ENCODE measurements at regions of chr19 and their contacts with region 1.

Region 1: GRCh38 chr19:56367829-56368711 is 25.3 kb downstream of the ZNF582 start:
- DNase-seq: peak; percentile 85
- H3K4me3 ChIP-seq: peak overlapping the region; percentile 38 to 63 (median 56)
- H3K27ac ChIP-seq: peak overlapping the region; percentile 79 to 88 (median 81)
- H3K4me1 ChIP-seq: peaks cover 0 to 11% (median 4%) of the 10 kb centered on the region in 4 donors
- H3K27me3 ChIP-seq: no peaks in the 10 kb centered on the region
- CTCF ChIP-seq: peak in 1 of 5 experiments; percentile 13
- EP300 ChIP-seq: no peak
- POLR2A ChIP-seq: peak; percentile 52

Region 2: DNA sequence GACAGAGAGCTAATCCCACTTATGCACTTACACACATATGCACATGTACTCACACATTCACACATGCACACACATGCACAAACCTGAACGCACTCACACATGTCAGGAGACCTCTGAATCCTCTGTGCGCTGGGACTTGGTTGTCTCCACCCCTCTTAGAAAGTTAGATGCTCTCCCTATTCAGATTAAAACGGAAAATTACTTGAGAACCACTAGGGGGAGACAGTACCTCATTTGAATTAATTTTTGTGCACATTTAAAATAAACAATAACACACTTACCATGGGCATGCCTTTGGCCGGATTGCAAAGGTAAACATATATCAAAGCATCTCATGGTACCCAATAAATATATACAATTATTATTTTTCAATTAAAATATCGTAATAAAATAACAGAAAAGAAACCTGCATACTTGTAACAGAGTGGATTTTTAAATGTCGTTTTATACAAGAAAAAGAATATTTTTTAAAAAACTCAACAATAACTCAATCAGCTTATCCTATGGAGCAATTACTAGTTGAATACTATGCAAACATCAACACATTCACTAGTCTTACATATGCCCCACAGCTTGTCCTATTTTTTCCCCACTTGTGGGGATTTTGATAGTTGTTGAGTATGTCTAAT is 1714.8 kb before region 1 on chr19:
- in situ Hi-C with region 1: no loop called
- intact Hi-C with region 1: loop called (anchors 10 kb)
- DNase-seq: no peak
- H3K4me3 ChIP-seq: no peak overlapping the region
- H3K27ac ChIP-seq: no peak overlapping the region
- H3K4me1 ChIP-seq: no peaks in the 10 kb centered on the region
- H3K27me3 ChIP-seq: peaks cover 7% of the 10 kb centered on the region
- CTCF ChIP-seq: peak; percentile 25 to 56 (median 50)
- EP300 ChIP-seq: no peak
- POLR2A ChIP-seq: no peak

Region 3: DNA sequence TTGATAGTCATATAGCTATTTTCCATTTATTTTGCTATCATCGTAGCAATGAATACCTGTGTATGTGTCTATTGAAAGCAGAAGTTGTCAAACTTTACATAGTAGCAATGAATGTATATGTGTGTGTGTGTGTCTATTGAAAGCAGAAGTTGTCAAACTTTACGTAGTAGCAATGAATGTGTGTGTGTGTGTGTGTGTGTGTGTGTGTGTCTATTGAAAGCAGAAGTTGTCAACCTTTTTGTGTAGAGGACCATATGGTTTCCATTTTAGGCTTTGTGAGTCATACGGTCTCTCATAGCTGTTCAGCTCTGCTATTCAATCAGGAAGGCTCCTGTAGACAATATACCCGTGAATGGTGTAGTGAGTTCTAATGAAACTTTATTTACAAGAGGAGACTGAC is 510.9 kb before region 1 on chr19:
- in situ Hi-C with region 1: no loop called
- intact Hi-C with region 1: no loop called
- DNase-seq: no peak
- H3K4me3 ChIP-seq: no peak overlapping the region
- H3K27ac ChIP-seq: no peak overlapping the region
- H3K4me1 ChIP-seq: no peaks in the 10 kb centered on the region
- H3K27me3 ChIP-seq: no peaks in the 10 kb centered on the region
- CTCF ChIP-seq: no peak
- EP300 ChIP-seq: no peak
- POLR2A ChIP-seq: no peak

Region 4: GRCh38 chr19:56217039-56217949 is 150.8 kb before region 1 on chr19:
- in situ Hi-C with region 1: no loop called
- intact Hi-C with region 1: no loop called
- DNase-seq: no peak
- H3K4me3 ChIP-seq: peak overlapping the region in 2 of 4 donors; percentile 25 to 29
- H3K27ac ChIP-seq: no peak overlapping the region
- H3K4me1 ChIP-seq: peaks cover 0 to 7% (median 1%) of the 10 kb centered on the region in 4 donors
- H3K27me3 ChIP-seq: peaks cover 15% of the 10 kb centered on the region
- CTCF ChIP-seq: no peak
- EP300 ChIP-seq: no peak
- POLR2A ChIP-seq: no peak